ENCODE measurements at regions of chr12 and their contacts with region 1.

Region 1: DNA sequence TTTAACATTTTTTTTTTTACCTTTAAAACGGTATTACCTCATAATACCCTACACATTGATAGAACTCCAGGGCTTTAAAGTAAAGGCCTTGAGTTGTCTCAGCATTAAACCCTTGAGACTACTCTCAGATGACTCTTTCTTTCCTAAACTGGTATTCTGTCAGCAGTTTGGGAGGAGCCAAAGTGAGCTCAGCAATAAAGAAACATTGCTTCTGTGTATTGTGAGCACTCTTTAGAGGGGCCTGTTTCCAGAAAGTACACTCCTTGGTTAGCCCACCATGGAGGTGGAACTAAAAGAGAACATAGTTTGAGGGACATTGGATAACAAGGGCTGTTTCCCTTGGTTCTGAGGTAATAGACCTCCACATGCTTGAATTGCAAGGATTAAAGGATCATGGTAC is 20.4 kb downstream of the MAP3K12 start:
- DNase-seq: no peak
- H3K4me3 ChIP-seq: no peak overlapping the region
- H3K27ac ChIP-seq: peak overlapping the region; percentile 45 to 62
- H3K4me1 ChIP-seq: no peaks in the 10 kb centered on the region
- H3K27me3 ChIP-seq: no peaks in the 10 kb centered on the region
- CTCF ChIP-seq: no peak

Region 2: GRCh38 chr12:53508534-53509199 is 29.8 kb after region 1 on chr12:
- intact Hi-C with region 1: loop called (anchors 2 kb)
- DNase-seq: peak; percentile 50 to 94
- H3K4me3 ChIP-seq: no peak overlapping the region
- H3K27ac ChIP-seq: peak overlapping the region; percentile 20 to 43
- H3K4me1 ChIP-seq: peaks cover 15 to 28% of the 10 kb centered on the region in 2 donors
- H3K27me3 ChIP-seq: no peaks in the 10 kb centered on the region
- CTCF ChIP-seq: peak; percentile 85 to 93 (median 88)

Region 3: GRCh38 chr12:53596920-53597363 is 118.1 kb after region 1 on chr12:
- intact Hi-C with region 1: no loop called
- DNase-seq: no peak
- H3K4me3 ChIP-seq: no peak overlapping the region
- H3K27ac ChIP-seq: peak overlapping the region; percentile 38 to 63
- H3K4me1 ChIP-seq: peaks cover 0 to 26% of the 10 kb centered on the region in 2 donors
- H3K27me3 ChIP-seq: no peaks in the 10 kb centered on the region
- CTCF ChIP-seq: no peak

Region 4: GRCh38 chr12:53712059-53712643 is 233.3 kb after region 1 on chr12:
- intact Hi-C with region 1: no loop called
- DNase-seq: no peak
- H3K4me3 ChIP-seq: no peak overlapping the region
- H3K27ac ChIP-seq: no peak overlapping the region
- H3K4me1 ChIP-seq: no peaks in the 10 kb centered on the region
- H3K27me3 ChIP-seq: no peaks in the 10 kb centered on the region
- CTCF ChIP-seq: no peak

Measured in ascending aorta (tissue), 2 donors.